ENCODE measurements at regions of chr7 and their contacts with region 1.

Region 1: DNA sequence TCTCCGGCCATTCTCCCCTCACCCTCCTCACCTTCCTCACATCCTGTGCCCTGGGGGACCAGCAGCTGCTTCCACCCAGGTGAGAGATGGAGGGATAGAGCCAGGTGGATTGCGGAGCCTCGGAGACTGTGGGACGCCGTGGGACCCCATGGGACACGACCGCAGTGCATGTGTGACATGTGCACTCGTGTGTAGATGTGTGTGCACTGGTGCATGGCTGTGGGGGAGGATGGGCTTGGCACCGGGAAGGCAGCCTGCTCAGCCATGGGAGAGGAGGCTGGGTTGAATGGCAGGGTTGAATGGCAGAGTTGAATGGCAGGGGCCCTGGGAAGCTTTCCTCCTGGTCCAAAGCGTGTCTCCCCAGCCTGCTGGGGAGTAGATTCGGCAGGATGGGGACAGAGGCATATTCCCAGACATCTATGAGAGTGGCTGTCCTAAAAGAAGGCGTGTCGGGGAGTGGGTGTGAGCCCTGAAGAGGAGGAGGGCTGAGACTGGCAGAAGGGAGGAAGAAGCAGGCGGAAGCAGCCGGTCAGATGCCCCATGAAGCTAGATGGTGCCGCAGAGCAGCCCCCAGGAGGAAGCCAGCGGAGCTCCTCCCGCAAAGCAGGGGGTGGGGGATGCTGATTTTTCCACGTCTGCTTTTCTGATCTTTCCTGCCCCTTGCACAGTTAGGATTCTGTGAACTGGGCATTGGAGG is 815 bp downstream of the GIMAP8 start:
- DNase-seq: peak; percentile 48 to 61 (median 51)
- H3K4me3 ChIP-seq: peak overlapping the region; percentile 77 to 100 (median 92)
- H3K4me3 Mint-ChIP-seq: peak overlapping the region; percentile 100
- H3K27ac ChIP-seq: peak overlapping the region; percentile 79 to 87
- H3K27ac Mint-ChIP-seq: peak overlapping the region; percentile 90 to 97 (median 96)
- H3K4me1 ChIP-seq: peaks cover 50 to 67% of the 10 kb centered on the region in 2 donors
- H3K4me1 Mint-ChIP-seq: peaks cover 74% of the 10 kb centered on the region
- H3K27me3 ChIP-seq: no peaks in the 10 kb centered on the region
- H3K27me3 Mint-ChIP-seq: peaks cover 0 to 1% (median 0%) of the 10 kb centered on the region in 3 donors
- CTCF ChIP-seq: no peak

Region 2: DNA sequence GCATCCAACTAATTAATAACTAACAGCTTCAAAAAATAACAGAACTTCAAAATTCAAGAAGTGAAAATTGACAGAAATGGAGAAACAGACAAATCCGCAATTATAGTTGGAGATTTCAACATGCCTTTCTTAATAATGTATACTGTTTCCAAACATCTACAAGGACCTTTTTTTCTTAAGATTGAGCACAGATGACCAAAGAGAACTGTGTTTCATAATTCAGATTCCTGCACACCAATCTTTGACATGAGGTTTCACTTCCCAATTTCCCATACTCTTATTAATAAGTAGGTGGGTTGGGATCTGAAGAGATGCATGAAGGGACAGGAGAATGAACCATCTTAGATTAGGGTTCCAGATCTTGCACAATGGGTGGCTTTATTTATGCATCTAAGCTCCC is 38.5 kb after region 1 on chr7:
- intact Hi-C with region 1: loop called in 1 of 2 experiments (anchors 2 kb)
- DNase-seq: peak; percentile 79 to 98 (median 93)
- H3K4me3 ChIP-seq: peak overlapping the region in 1 of 3 experiments; percentile 55
- H3K4me3 Mint-ChIP-seq: no peak overlapping the region
- H3K27ac ChIP-seq: peak overlapping the region in 1 of 2 donors; percentile 77
- H3K27ac Mint-ChIP-seq: peak overlapping the region; percentile 76 to 94 (median 91)
- H3K4me1 ChIP-seq: peaks cover 58 to 63% of the 10 kb centered on the region in 2 donors
- H3K4me1 Mint-ChIP-seq: peaks cover 73% of the 10 kb centered on the region
- H3K27me3 ChIP-seq: no peaks in the 10 kb centered on the region
- H3K27me3 Mint-ChIP-seq: no peaks in the 10 kb centered on the region
- CTCF ChIP-seq: no peak

Region 3: GRCh38 chr7:150514748-150515222 is 63.5 kb after region 1 on chr7 and contains the start of gene GIMAP7:
- intact Hi-C with region 1: loop called in 1 of 2 experiments (anchors 5 kb)
- DNase-seq: peak; percentile 10 to 27 (median 15)
- H3K4me3 ChIP-seq: peak within 1 kb of the TSS; percentile 66 to 100 (median 81)
- H3K4me3 Mint-ChIP-seq: peak within 1 kb of the TSS; percentile 100
- H3K27ac ChIP-seq: peak within 1 kb of the TSS; percentile 60 to 81
- H3K27ac Mint-ChIP-seq: peak within 1 kb of the TSS; percentile 74 to 97 (median 94)
- H3K4me1 ChIP-seq: peaks cover 20 to 39% of the 10 kb centered on the region in 2 donors
- H3K4me1 Mint-ChIP-seq: peaks cover 48% of the 10 kb centered on the region
- H3K27me3 ChIP-seq: no peaks in the 10 kb centered on the region
- H3K27me3 Mint-ChIP-seq: peaks cover 0 to 2% (median 0%) of the 10 kb centered on the region in 3 donors
- CTCF ChIP-seq: no peak
- polyA plus RNA-seq, gene GIMAP7: 26.2 to 115 (median 54.5) TPM

Region 4: GRCh38 chr7:150531704-150532103 is 80.5 kb after region 1 on chr7:
- intact Hi-C with region 1: no loop called
- DNase-seq: no peak
- H3K4me3 ChIP-seq: no peak overlapping the region
- H3K4me3 Mint-ChIP-seq: no peak overlapping the region
- H3K27ac ChIP-seq: no peak overlapping the region
- H3K27ac Mint-ChIP-seq: no peak overlapping the region
- H3K4me1 ChIP-seq: no peaks in the 10 kb centered on the region
- H3K4me1 Mint-ChIP-seq: peaks cover 9% of the 10 kb centered on the region
- H3K27me3 ChIP-seq: no peaks in the 10 kb centered on the region
- H3K27me3 Mint-ChIP-seq: peaks cover 0 to 1% (median 0%) of the 10 kb centered on the region in 3 donors
- CTCF ChIP-seq: no peak

Region 5: GRCh38 chr7:150753826-150754603 is 302.8 kb after region 1 on chr7:
- intact Hi-C with region 1: loop called (anchors 2 to 5 kb)
- DNase-seq: peak; percentile 12 to 77 (median 20)
- H3K4me3 ChIP-seq: no peak overlapping the region
- H3K4me3 Mint-ChIP-seq: no peak overlapping the region
- H3K27ac ChIP-seq: peak overlapping the region in 1 of 2 donors; percentile 56
- H3K27ac Mint-ChIP-seq: peak overlapping the region in 3 of 7 donors; percentile 33 to 82 (median 78)
- H3K4me1 ChIP-seq: peaks cover 35 to 42% of the 10 kb centered on the region in 2 donors
- H3K4me1 Mint-ChIP-seq: peaks cover 45% of the 10 kb centered on the region
- H3K27me3 ChIP-seq: no peaks in the 10 kb centered on the region
- H3K27me3 Mint-ChIP-seq: peaks cover 1 to 4% (median 2%) of the 10 kb centered on the region in 3 donors
- CTCF ChIP-seq: no peak